A673 (cell line): ENCODE measurements at regions of chr11 and their contacts with region 1.

Region 1: GRCh38 chr11:73335204-73335923 is 27.3 kb downstream of the ARHGEF17 start:
- DNase-seq: peak; percentile 94
- H3K4me3 ChIP-seq: no peak overlapping the region
- H3K27ac ChIP-seq: peak overlapping the region; percentile 70
- H3K4me1 ChIP-seq: peaks cover 36% of the 10 kb centered on the region
- H3K27me3 ChIP-seq: no peaks in the 10 kb centered on the region
- CTCF ChIP-seq: peak; percentile 100

Region 2: DNA sequence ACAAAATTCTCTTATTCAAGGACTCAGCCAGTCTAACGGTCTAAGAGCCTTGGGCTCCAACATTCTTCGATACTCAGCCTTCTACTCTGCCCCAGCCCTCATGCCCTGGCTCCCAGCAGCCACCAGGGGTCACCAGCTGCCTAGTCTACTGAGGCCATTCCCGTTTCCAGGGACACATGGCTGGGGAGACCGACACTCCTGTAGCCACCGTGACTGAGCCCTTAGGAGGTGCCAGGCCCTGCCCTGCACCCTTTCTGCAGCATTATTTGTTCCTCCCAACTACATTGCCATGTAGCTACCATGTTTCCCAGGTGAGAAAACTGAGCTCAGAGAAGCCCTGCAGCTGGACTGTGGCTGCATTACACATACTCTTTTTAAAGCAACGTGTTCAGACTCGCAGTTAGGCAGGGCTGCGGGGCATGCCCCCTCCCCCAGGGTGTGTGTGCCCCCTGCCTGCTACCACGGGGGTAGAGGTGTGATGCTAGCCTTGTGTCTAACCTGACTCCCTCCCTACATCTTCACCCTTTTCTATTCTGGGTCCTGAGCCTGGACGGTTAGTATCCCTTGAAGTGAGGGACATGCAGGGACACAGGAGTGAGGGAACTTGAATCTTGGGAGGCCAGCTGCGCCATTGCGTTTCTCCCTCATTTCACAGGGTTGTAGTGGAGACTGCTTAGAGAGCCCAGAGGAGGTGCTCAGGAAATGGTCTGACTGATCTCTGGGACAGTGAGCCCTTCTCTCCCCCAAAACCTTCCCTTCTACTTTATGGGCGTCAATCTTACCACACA is 503.7 kb before region 1 on chr11:
- CTCF ChIA-PET with region 1: no interaction called
- POLR2A ChIA-PET with region 1: no interaction called
- intact Hi-C with region 1: loop called (anchors 5 kb)
- DNase-seq: peak; percentile 90
- H3K4me3 ChIP-seq: no peak overlapping the region
- H3K27ac ChIP-seq: no peak overlapping the region
- H3K4me1 ChIP-seq: no peaks in the 10 kb centered on the region
- H3K27me3 ChIP-seq: no peaks in the 10 kb centered on the region
- CTCF ChIP-seq: peak; percentile 97

Region 3: GRCh38 chr11:73184953-73185671 is 150.3 kb before region 1 on chr11:
- CTCF ChIA-PET with region 1: interaction called, 14 read pairs
- POLR2A ChIA-PET with region 1: no interaction called
- intact Hi-C with region 1: loop called (anchors 1 kb)
- DNase-seq: peak; percentile 75
- H3K4me3 ChIP-seq: no peak overlapping the region
- H3K27ac ChIP-seq: no peak overlapping the region
- H3K4me1 ChIP-seq: no peaks in the 10 kb centered on the region
- H3K27me3 ChIP-seq: no peaks in the 10 kb centered on the region
- CTCF ChIP-seq: peak; percentile 96

Region 4: DNA sequence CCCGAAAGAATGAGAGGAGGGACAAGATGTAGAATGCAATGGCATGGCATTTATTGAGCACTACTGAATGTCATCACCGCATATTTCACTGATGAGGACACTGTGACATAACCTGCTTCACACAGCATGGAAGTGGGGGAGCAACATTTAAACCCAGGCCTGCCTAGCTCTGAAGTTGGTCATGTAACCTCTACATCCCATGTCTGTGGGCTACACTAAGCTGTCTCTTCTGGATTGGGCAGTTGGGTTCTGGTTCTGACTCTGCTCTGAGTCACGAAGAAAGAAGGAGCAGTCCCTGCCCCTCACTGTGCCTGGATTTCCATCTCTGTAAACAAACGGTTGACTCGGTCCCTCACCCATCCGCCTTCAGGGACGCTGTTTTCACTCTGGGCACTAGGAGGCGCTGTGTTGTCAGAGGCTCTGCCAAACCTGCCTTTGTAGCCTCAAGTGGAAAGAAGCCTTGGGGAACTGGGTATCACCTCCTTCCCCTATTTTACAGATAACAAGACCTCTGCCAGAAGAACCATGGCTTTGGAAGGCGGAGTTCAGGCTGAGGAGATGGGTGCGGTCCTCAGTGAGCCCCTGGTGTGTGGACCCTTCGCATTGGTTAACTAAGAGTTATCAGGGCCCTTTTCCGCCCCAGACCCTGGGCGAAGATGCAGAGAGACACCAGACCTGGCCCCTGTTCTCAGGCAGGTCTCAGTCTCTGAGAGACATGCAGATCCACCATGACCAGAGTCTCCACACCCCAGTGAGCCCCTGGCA is 40.0 kb before region 1 on chr11:
- CTCF ChIA-PET with region 1: interaction called, 12 read pairs
- POLR2A ChIA-PET with region 1: interaction called, 6 read pairs
- intact Hi-C with region 1: loop called (anchors 1 kb)
- DNase-seq: peak; percentile 89
- H3K4me3 ChIP-seq: no peak overlapping the region
- H3K27ac ChIP-seq: no peak overlapping the region
- H3K4me1 ChIP-seq: peaks cover 4% of the 10 kb centered on the region
- H3K27me3 ChIP-seq: no peaks in the 10 kb centered on the region
- CTCF ChIP-seq: peak; percentile 99

Region 5: GRCh38 chr11:73350908-73351636 is 15.7 kb after region 1 on chr11:
- CTCF ChIA-PET with region 1: interaction called, 17 read pairs
- POLR2A ChIA-PET with region 1: no interaction called
- intact Hi-C with region 1: no loop called
- DNase-seq: peak; percentile 87
- H3K4me3 ChIP-seq: no peak overlapping the region
- H3K27ac ChIP-seq: no peak overlapping the region
- H3K4me1 ChIP-seq: no peaks in the 10 kb centered on the region
- H3K27me3 ChIP-seq: no peaks in the 10 kb centered on the region
- CTCF ChIP-seq: peak; percentile 100